Colonic mucosa (tissue), 4 donors: ENCODE measurements at regions of chr1 and their contacts with region 1.

Region 1: DNA sequence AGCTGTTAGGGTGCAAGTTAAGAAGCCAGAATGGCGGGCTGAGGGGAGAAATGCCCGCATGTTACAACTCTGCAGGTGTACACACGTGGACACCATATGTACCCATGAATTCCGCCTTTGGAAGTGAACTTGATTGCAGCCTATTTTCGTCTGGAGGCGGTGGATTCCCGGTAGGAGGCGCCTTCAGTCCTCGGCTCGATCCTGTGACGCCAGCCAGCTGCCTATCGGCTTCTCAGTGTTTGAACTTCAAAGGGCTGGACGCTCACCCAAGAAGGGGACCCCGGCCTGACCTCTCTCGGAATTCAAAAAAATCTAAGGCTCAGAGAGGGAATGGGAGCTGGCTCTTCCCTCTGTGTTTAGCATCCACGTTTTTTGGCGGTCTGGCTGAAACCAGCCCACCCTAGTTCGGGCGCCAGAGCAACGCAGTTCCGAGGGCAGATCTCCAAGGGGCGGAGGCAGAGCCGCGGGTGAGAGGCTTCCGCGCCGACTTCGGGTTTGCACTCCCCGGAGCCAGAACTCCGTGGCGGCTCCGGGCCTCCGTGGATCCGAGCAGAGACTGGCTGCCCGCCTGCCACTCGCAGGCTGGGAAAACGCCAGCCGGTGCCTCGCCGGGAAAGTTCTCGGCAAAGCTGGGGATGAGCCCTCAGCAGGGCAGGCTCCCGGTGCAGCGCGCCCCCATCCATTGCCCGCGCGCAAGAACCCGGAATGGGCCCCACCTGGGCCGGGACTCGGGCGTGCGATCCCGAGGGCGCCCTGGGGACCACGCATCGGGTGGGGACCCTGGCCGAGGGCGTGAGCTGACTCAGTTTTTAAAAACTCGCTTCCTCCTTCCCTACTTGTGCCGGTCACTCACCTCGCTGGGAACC is 996 bp upstream of the TMEM51 start:
- DNase-seq: peak; percentile 92
- H3K4me3 ChIP-seq: peak overlapping the region; percentile 87
- H3K27ac ChIP-seq: peak overlapping the region; percentile 94
- H3K4me1 ChIP-seq: peaks cover 17% of the 10 kb centered on the region
- H3K27me3 ChIP-seq: no peaks in the 10 kb centered on the region
- CTCF ChIP-seq: peak; percentile 48

Region 2: GRCh38 chr1:15218287-15219279 is 66.0 kb after region 1 on chr1:
- intact Hi-C with region 1: no loop called
- DNase-seq: no peak
- H3K4me3 ChIP-seq: no peak overlapping the region
- H3K27ac ChIP-seq: no peak overlapping the region
- H3K4me1 ChIP-seq: peaks cover 4% of the 10 kb centered on the region
- H3K27me3 ChIP-seq: no peaks in the 10 kb centered on the region
- CTCF ChIP-seq: no peak

Region 3: DNA sequence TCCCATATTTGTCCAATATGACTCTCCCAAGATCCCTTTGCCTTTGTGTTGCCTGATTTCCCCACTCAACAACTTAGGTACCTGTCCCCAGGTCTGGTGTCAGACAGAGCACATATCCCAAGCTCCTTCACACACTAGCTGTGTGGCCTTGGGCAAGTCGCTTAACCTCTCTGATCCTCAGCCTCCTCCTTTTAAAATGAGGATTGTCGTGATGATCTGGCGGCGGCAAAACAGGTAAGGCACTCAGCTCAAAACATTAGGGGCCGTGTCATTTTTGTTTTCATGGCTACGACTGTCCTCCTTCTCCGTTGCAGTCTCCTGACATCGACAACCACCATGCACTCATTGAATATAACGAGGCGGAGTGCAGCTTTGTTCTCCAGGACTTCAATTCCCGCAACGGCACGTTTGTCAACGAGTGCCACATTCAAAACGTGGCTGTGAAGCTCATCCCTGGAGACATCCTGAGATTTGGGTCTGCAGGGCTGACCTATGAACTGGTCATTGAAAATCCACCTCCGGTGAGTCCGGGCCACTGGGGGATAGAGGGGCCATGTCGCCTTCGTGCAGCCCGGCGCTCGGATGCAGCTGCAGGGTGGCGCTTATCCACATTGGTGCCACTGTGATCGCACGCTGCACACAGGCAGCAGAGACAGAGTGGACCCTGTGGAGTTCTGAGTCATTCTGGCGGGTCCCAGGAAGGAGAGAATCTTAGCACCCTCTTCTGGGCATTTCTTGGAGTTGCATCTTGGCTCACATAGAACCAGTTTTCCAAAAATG is 119.6 kb after region 1 on chr1:
- intact Hi-C with region 1: loop called (anchors 5 kb)
- DNase-seq: peak; percentile 81
- H3K4me3 ChIP-seq: no peak overlapping the region
- H3K27ac ChIP-seq: no peak overlapping the region
- H3K4me1 ChIP-seq: no peaks in the 10 kb centered on the region
- H3K27me3 ChIP-seq: no peaks in the 10 kb centered on the region
- CTCF ChIP-seq: peak; percentile 74